Naive thymus-derived CD4-positive, alpha-beta T cell (primary cell): ENCODE measurements at regions of chr1 and their contacts with region 1.

Region 1: DNA sequence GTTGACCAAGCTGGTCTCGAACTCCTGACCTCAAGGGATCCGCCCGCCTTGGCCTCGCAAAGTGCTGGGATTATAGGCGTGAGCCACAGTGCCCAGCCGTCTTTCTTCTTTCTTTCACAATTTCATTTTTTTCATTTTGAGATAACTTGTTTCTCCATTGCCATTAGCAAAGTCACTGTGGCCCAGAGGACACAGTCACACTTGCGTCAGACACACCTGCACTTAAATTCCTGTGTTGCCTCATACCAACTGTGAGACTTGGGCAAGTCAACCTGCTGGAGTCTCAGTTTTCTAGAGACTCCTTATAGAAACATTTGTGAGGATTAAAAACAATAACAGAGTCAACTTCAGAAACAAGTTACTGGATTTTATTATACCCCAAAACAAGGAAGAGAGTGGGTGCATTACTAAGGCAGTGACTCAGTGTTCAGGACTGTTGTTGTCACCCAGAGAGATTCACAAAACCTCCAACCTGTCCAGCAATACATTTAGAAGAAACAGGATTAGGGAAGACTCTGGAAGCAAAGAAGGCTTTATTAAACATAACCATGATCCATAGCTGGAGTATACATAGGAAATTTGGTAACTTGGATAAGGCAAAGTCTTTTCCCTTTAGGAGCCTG is 2.6 kb downstream of the TEDDM1 start:
- DNase-seq: no peak
- ATAC-seq: no peak
- H3K4me3 ChIP-seq: no peak overlapping the region
- H3K4me3 Mint-ChIP-seq: no peak overlapping the region
- H3K27ac ChIP-seq: no peak overlapping the region
- H3K27ac Mint-ChIP-seq: no peak overlapping the region
- H3K4me1 ChIP-seq: no peaks in the 10 kb centered on the region
- H3K4me1 Mint-ChIP-seq: peaks cover 5 to 11% (median 6%) of the 10 kb centered on the region in 7 donors
- H3K27me3 ChIP-seq: no peaks in the 10 kb centered on the region
- H3K27me3 Mint-ChIP-seq: peaks cover 0 to 28% (median 0%) of the 10 kb centered on the region in 5 donors

Region 2: DNA sequence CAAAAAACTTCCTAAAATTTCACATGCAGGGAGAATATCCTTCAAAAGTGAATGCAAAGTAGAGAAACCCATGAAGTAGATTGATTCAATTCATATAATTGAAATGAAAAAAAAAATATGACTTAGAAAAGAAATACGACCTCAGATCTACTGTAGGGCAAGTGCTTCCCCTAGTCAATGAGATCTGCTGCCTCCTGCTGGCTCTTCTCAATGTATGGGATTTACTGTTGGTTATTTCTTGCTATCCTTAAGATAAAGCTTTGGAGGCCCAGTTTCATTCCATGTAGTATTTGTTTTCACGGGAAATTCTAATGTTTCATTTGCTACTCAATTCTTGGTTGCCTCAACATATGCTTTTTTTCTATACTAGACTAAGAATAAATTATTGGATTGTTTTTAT is 382.5 kb before region 1 on chr1:
- CTCF ChIA-PET with region 1: no interaction called
- POLR2A ChIA-PET with region 1: no interaction called
- intact Hi-C with region 1: no loop called
- DNase-seq: no peak
- ATAC-seq: no peak
- H3K4me3 ChIP-seq: no peak overlapping the region
- H3K4me3 Mint-ChIP-seq: no peak overlapping the region
- H3K27ac ChIP-seq: no peak overlapping the region
- H3K27ac Mint-ChIP-seq: no peak overlapping the region
- H3K4me1 ChIP-seq: no peaks in the 10 kb centered on the region
- H3K4me1 Mint-ChIP-seq: no peaks in the 10 kb centered on the region
- H3K27me3 ChIP-seq: no peaks in the 10 kb centered on the region
- H3K27me3 Mint-ChIP-seq: peaks cover 4 to 19% (median 6%) of the 10 kb centered on the region in 5 donors

Region 3: GRCh38 chr1:182259229-182259872 is 138.5 kb before region 1 on chr1:
- CTCF ChIA-PET with region 1: interaction called, 4 read pairs
- POLR2A ChIA-PET with region 1: no interaction called
- intact Hi-C with region 1: loop called in 1 of 2 experiments (anchors 1 kb)
- DNase-seq: peak; percentile 21 to 79 (median 65)
- ATAC-seq: peak; percentile 90
- H3K4me3 ChIP-seq: peak overlapping the region; percentile 2
- H3K4me3 Mint-ChIP-seq: peak overlapping the region; percentile 28 to 82 (median 75)
- H3K27ac ChIP-seq: peak overlapping the region; percentile 72
- H3K27ac Mint-ChIP-seq: peak overlapping the region; percentile 83 to 97 (median 91)
- H3K4me1 ChIP-seq: peaks cover 11 to 20% of the 10 kb centered on the region in 2 donors
- H3K4me1 Mint-ChIP-seq: peaks cover 23 to 50% (median 43%) of the 10 kb centered on the region in 7 donors
- H3K27me3 ChIP-seq: no peaks in the 10 kb centered on the region
- H3K27me3 Mint-ChIP-seq: no peaks in the 10 kb centered on the region

Region 4: DNA sequence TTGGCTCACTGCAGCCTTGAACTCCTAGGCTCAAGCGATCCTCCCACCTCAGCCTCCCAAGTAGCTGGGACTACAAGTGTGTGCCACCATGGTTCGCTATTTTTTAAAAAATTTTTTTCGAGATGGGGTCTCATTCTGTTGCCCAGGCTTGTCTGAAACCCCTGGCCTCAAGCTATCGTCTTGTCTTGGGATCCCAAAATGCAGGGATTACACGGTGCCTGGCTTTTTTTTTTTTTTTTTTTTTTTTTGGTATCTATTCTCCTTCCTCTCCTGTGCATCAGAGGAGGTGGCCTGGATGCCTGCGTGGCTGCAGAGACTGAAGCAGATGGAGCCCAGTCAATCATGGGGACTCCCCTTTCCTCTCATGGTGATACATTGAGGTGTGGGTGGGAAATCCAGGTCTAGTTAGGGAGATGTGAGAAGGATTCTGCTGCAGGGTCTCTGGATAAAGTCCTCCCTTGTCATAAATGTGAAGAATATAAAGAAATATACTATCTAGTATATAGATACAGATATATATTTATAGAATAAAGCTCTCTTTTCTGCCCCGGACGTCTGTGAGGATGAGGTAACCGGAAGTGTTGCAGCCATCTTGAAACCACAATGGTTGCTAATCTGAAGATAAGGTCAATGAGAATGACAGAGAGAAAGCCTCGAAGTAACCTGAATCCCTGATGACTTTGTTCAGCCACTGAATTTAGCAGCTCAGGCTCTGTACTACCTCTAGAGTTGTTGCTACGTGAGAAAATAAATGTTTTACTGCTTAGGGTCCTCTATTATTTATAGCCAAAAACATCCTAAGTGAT is 32.6 kb after region 1 on chr1:
- CTCF ChIA-PET with region 1: no interaction called
- POLR2A ChIA-PET with region 1: no interaction called
- intact Hi-C with region 1: loop called in 1 of 2 experiments (anchors 2 kb)
- DNase-seq: peak in 6 of 9 donors; percentile 4 to 41 (median 22)
- ATAC-seq: peak; percentile 86
- H3K4me3 ChIP-seq: no peak overlapping the region
- H3K4me3 Mint-ChIP-seq: peak overlapping the region in 2 of 10 donors; percentile 12 to 16
- H3K27ac ChIP-seq: no peak overlapping the region
- H3K27ac Mint-ChIP-seq: peak overlapping the region in 2 of 9 donors; percentile 36 to 70
- H3K4me1 ChIP-seq: peaks cover 0 to 8% of the 10 kb centered on the region in 2 donors
- H3K4me1 Mint-ChIP-seq: peaks cover 11 to 20% (median 14%) of the 10 kb centered on the region in 7 donors
- H3K27me3 ChIP-seq: no peaks in the 10 kb centered on the region
- H3K27me3 Mint-ChIP-seq: peaks cover 0 to 23% (median 0%) of the 10 kb centered on the region in 5 donors

Region 5: GRCh38 chr1:182549346-182549745 is 151.5 kb after region 1 on chr1:
- CTCF ChIA-PET with region 1: no interaction called
- POLR2A ChIA-PET with region 1: no interaction called
- intact Hi-C with region 1: no loop called
- DNase-seq: no peak
- ATAC-seq: no peak
- H3K4me3 ChIP-seq: no peak overlapping the region
- H3K4me3 Mint-ChIP-seq: no peak overlapping the region
- H3K27ac ChIP-seq: no peak overlapping the region
- H3K27ac Mint-ChIP-seq: no peak overlapping the region
- H3K4me1 ChIP-seq: no peaks in the 10 kb centered on the region
- H3K4me1 Mint-ChIP-seq: no peaks in the 10 kb centered on the region
- H3K27me3 ChIP-seq: no peaks in the 10 kb centered on the region
- H3K27me3 Mint-ChIP-seq: peaks cover 13 to 22% (median 17%) of the 10 kb centered on the region in 5 donors